HepG2 (cell line): ENCODE measurements at regions of chr6 and their contacts with region 1.

Region 1: DNA sequence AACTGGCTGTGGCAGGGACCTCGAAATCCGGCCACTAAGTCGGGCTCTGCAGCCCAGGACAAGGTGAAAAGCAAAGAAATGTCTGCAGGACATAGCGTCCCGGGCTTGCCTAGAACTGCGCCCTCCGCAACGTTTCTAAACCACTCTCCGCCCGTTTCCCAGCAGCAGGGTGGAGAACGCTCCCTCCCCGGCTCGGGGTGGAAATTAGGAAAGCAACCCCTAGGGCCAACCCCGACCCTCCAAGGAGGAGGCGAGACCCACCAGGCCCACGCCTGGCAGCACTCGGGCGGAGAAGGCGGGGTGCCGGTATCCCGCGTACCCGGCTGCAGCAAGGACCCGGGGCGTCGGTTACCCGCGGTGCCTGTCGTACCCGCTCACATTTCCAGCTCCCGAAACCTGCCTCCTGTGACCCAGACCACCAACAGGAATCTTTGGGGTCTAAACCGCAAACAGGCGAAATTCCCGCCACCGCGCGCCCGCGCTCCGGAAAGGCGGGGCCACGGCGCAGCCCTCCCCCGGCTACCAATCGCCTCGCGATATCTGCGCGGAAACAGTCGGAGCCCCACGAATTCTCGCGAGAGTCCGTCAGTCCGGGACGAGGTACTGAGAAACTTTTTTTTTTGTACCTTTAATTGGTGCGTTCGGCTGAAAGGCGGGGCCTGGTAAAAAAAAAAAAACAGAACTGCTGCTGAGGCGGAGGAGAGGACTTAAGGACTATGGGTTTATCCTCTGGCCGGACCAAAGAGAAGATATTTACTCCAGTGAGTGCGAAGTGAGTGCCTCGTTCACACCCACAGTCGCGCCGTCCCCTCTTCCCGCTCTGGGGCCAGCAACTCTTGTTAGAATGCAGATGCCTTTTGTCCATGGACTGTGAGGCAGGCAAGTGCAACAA is at the start of gene MMS22L:
- DNase-seq: peak; percentile 92
- ATAC-seq: peak; percentile 97
- H3K4me3 ChIP-seq: peak within 1 kb of the TSS; percentile 77 to 96 (median 91)
- H3K27ac ChIP-seq: peak within 1 kb of the TSS; percentile 76
- H3K4me1 ChIP-seq: peaks cover 16% of the 10 kb centered on the region
- H3K27me3 ChIP-seq: no peaks in the 10 kb centered on the region; a peak in 1 of 5 replicates
- CTCF ChIP-seq: no peak
- EP300 ChIP-seq: no peak
- POLR2A ChIP-seq: peak; percentile 36 to 65; a peak in 3 of 4 replicates
- RAD21 ChIP-seq: 0 out of 2 replicates have a peak, but pooled peaks have one; percentile 5
- total RNA-seq, gene MMS22L: 32.9 and 51.8 TPM in 2 replicates

Region 2: GRCh38 chr6:96967957-96968871 is 314.8 kb before region 1 on chr6:
- CTCF ChIA-PET with region 1: no interaction called
- POLR2A ChIA-PET with region 1: no interaction called
- in situ Hi-C with region 1: no loop called
- intact Hi-C with region 1: no loop called
- DNase-seq: no peak
- ATAC-seq: no peak
- H3K4me3 ChIP-seq: no peak overlapping the region
- H3K27ac ChIP-seq: no peak overlapping the region
- H3K4me1 ChIP-seq: no peaks in the 10 kb centered on the region
- H3K27me3 ChIP-seq: no peaks in the 10 kb centered on the region
- CTCF ChIP-seq: no peak
- EP300 ChIP-seq: no peak
- POLR2A ChIP-seq: no peak
- RAD21 ChIP-seq: no peak

Region 3: GRCh38 chr6:97322811-97323210 is 39.8 kb after region 1 on chr6:
- CTCF ChIA-PET with region 1: no interaction called
- POLR2A ChIA-PET with region 1: no interaction called
- in situ Hi-C with region 1: no loop called
- intact Hi-C with region 1: loop called (anchors 1 kb)
- DNase-seq: no peak
- ATAC-seq: no peak
- H3K4me3 ChIP-seq: no peak overlapping the region
- H3K27ac ChIP-seq: no peak overlapping the region
- H3K4me1 ChIP-seq: no peaks in the 10 kb centered on the region
- H3K27me3 ChIP-seq: no peaks in the 10 kb centered on the region
- CTCF ChIP-seq: no peak
- EP300 ChIP-seq: no peak
- POLR2A ChIP-seq: no peak
- RAD21 ChIP-seq: no peak

Region 4: DNA sequence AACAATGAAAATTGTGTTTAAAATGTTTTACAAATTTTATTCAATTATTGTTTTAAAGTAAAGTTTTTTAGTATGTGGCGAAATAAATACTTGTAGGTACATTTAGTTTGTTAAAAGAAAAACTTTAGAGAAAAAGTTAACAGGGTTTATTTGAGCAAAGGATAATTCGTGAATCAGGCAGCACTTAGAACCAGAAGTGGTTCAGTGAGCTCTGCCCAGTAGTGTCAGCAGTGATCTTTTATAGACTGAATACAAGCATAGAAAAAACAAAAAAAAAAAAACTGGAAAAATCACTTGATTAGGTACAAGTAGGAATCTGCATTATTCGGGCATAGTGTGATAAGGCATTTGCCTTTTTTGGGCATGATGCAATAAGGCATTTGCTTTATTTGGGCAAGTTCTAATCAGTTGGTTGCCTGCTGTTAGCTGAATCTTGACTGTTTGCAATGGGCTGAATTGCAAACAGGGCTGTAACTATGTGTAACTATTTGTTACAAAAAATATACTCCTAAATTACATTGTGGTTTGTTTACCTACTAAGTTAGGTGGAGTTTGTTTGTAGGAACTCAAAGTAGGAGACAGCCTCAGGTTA is 122.9 kb after region 1 on chr6:
- CTCF ChIA-PET with region 1: no interaction called
- POLR2A ChIA-PET with region 1: no interaction called
- in situ Hi-C with region 1: no loop called
- intact Hi-C with region 1: no loop called
- DNase-seq: no peak
- ATAC-seq: no peak
- H3K4me3 ChIP-seq: no peak overlapping the region
- H3K27ac ChIP-seq: no peak overlapping the region
- H3K4me1 ChIP-seq: no peaks in the 10 kb centered on the region
- H3K27me3 ChIP-seq: no peaks in the 10 kb centered on the region
- CTCF ChIP-seq: no peak
- EP300 ChIP-seq: no peak
- POLR2A ChIP-seq: no peak
- RAD21 ChIP-seq: no peak